Spleen (tissue), 13 donors: ENCODE measurements at regions of chr14 and their contacts with region 1.

Region 1: DNA sequence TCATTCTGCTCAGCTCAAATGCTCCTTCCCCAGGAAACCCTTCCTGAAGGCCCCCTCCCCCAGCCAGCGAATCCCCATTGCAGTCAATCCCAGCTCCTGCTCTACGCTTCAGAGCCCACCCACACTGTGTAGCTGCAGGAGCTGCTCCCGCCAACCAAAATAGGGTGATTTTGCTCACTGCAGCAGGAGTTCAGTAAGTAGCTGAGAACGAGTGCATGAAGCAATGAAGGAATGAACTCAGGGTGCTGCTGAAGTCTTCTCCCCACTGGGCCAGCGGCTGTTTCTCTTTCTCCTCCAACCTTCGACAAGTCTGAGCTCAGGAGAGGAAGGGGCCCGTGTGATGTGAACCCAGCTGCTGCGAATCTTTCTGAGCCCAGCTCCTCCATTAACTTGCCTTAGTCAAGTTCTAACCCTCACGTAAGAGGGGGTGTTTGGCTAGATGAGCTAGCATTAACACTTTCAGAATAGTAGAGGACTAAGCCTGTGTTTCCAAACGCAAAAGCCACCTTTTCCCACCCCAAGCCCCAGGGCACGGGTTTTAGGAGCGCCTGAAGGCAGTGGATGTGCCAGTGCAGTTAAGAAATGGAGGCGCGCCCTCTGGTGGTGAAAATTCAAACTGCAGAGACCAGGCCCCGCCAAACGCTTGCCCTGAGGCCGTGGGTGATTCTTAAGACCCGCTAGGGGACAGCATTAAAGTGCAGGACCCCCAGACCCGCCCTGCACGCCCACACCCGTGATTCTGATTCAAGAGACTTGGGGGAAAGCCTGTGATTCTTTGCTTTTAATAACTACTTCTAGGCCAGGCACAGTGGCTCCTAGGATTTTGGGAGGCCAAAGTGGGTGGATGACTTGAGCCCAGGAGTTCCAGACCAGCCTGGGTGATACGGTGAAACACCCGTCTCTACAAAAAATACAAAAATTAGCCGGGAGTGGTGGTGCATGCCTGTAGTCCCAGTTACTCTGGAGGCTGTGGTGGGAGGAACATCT is 11.9 kb upstream of the SERPINA4 start:
- DNase-seq: peak; percentile 83
- H3K4me3 ChIP-seq: no peak overlapping the region
- H3K27ac ChIP-seq: no peak overlapping the region
- H3K4me1 ChIP-seq: peaks cover 0 to 5% (median 0%) of the 10 kb centered on the region in 6 donors
- H3K27me3 ChIP-seq: peaks cover 0 to 33% (median 0%) of the 10 kb centered on the region in 7 donors
- CTCF ChIP-seq: peak; percentile 19 to 92 (median 86)
- POLR2A ChIP-seq: no peak

Region 2: DNA sequence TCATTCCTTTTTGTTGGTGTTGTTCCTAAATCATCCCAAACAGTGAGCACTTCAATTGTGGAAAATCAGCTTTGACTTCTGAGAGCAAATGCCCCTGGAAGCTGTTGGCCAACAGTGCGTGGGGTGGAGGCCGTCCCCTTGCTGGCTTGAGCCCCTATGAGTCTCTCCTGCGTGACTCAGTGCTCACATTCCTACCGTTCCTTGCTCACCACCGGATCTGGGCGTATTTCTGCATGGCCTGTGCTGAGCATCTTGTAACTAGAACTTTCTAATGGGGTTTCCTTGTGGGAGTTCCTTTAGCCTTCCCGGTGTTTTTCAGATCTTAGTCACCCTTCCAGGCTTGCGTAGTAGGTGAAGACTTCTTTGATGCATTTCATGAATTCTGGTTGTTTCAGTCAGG is 175.6 kb before region 1 on chr14:
- intact Hi-C with region 1: no loop called
- DNase-seq: no peak
- H3K4me3 ChIP-seq: no peak overlapping the region
- H3K27ac ChIP-seq: no peak overlapping the region
- H3K4me1 ChIP-seq: no peaks in the 10 kb centered on the region
- H3K27me3 ChIP-seq: no peaks in the 10 kb centered on the region
- CTCF ChIP-seq: no peak
- POLR2A ChIP-seq: no peak

Region 3: DNA sequence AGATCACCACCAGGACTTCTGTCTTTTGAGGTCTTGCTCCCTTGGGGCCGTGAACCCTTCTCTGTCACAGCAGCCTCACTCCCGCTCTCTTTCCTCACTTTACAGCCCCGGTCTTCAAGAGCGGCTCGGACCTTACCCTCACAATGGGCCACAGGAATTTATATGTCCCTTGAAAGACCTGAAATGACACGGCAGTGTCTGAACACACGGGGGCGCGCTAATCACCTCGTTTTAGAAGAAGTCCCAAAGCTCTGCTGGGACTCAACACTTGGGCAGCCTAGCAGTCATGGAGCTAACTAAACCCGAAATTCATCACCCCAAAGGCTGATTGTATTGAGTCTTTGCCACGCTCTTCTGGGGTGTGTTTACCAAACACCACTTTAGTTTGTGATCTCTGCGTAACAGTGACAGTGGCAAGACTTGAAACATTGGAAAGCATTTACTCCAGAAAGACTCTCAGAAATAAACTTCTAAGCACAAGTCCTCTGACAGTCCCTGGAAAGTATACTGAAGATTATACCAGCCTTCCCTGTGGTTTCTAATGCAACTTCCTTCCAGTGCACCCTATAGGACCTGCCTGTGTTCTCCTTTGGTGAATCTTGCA is 125.7 kb before region 1 on chr14:
- intact Hi-C with region 1: loop called (anchors 5 kb)
- DNase-seq: peak; percentile 84
- H3K4me3 ChIP-seq: no peak overlapping the region
- H3K27ac ChIP-seq: no peak overlapping the region
- H3K4me1 ChIP-seq: peaks cover 0 to 15% (median 0%) of the 10 kb centered on the region in 6 donors
- H3K27me3 ChIP-seq: peaks cover 0 to 31% (median 3%) of the 10 kb centered on the region in 7 donors
- CTCF ChIP-seq: peak in 9 of 11 experiments; percentile 21 to 61 (median 44)
- POLR2A ChIP-seq: no peak